Naive thymus-derived CD8-positive, alpha-beta T cell (primary cell): ENCODE measurements at regions of chr1 and their contacts with region 1.

Region 1: GRCh38 chr1:244864253-244865027 is at the start of gene HNRNPU:
- DNase-seq: peak; percentile 94 to 98 (median 96)
- ATAC-seq: peak; percentile 60 to 61
- H3K4me3 Mint-ChIP-seq: peak within 1 kb of the TSS; percentile 87 to 97 (median 94)
- H3K27ac Mint-ChIP-seq: peak within 1 kb of the TSS; percentile 97 to 100 (median 98)
- H3K4me1 Mint-ChIP-seq: peaks cover 21 to 56% (median 40%) of the 10 kb centered on the region in 4 donors
- H3K27me3 Mint-ChIP-seq: peaks cover 0 to 2% (median 0%) of the 10 kb centered on the region in 5 donors
- polyA plus RNA-seq, gene HNRNPU: 179 to 392 (median 281) TPM

Region 2: GRCh38 chr1:244461245-244462071 is 403.0 kb before region 1 on chr1 and contains the start of gene CATSPERE:
- POLR2A ChIA-PET with region 1: interaction called, 13 read pairs
- DNase-seq: peak; percentile 61 to 86 (median 74)
- ATAC-seq: peak; percentile 98 to 99
- H3K4me3 Mint-ChIP-seq: peak within 1 kb of the TSS; percentile 72 to 93 (median 88)
- H3K27ac Mint-ChIP-seq: peak within 1 kb of the TSS; percentile 83 to 97 (median 94)
- H3K4me1 Mint-ChIP-seq: peaks cover 5 to 17% (median 15%) of the 10 kb centered on the region in 4 donors
- H3K27me3 Mint-ChIP-seq: no peaks in the 10 kb centered on the region
- polyA plus RNA-seq, gene CATSPERE: 0.22 to 1.2 (median 0.61) TPM

Region 3: GRCh38 chr1:244801246-244801645 is 63.2 kb before region 1 on chr1:
- POLR2A ChIA-PET with region 1: interaction called, 18 read pairs
- DNase-seq: peak; percentile 23 to 79 (median 56)
- ATAC-seq: peak; percentile 92 to 98
- H3K4me3 Mint-ChIP-seq: peak overlapping the region in 2 of 10 donors; percentile 3 to 21
- H3K27ac Mint-ChIP-seq: peak overlapping the region in 4 of 10 donors; percentile 26 to 67 (median 56)
- H3K4me1 Mint-ChIP-seq: peaks cover 0 to 5% (median 2%) of the 10 kb centered on the region in 4 donors
- H3K27me3 Mint-ChIP-seq: peaks cover 0 to 3% (median 0%) of the 10 kb centered on the region in 5 donors

Region 4: GRCh38 chr1:244918421-244919319 is 54.2 kb after region 1 on chr1:
- POLR2A ChIA-PET with region 1: interaction called, 61 read pairs
- DNase-seq: peak; percentile 46 to 87 (median 79)
- ATAC-seq: peak; percentile 97
- H3K4me3 Mint-ChIP-seq: peak overlapping the region; percentile 85 to 98 (median 92)
- H3K27ac Mint-ChIP-seq: peak overlapping the region; percentile 58 to 97 (median 90)
- H3K4me1 Mint-ChIP-seq: peaks cover 1 to 20% (median 9%) of the 10 kb centered on the region in 4 donors
- H3K27me3 Mint-ChIP-seq: peaks cover 0 to 1% (median 0%) of the 10 kb centered on the region in 5 donors

Region 5: DNA sequence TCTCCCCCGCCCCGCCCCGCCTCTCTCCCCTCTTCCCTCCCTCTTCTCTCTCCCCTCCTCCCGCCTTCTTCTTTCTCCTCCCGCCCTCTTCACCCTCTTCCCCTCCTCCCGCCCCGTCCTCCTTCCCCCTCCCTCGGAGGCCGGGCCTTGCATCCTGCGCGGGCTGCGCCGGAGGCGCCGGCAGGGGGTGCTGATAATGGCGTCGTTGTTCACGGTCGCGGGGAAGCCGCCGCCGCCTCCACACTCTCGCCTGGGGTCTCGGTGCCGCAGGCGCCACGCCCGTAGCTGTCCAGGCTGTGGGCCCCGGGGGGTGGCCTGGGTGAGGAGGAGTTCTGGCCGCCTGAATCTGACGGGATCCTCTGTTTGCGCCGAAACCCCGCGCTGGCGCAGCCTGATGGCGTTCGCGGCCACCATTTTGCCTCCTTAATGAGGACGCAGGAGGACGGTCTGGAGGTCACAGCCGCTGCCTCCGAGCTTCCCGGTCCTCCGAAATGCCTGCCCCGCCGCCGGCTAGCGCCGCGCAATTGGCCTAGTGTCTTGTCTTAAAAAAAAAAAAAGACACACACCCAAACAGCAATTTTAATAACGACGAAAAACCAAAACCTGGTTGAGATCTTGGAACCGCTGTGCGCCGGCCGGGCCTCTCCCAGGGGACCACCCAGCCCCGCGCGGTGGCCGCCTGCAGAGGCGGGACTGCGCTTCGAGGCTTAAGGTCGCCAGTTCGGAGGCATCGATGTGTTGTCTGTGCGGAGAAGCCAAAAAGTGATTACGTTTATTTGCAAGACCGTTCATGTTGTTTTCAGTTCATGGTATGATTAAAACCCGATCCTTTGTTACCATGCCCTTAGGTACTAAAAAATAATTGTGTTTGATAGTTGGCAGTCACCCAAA is 106.5 kb after region 1 on chr1:
- POLR2A ChIA-PET with region 1: interaction called, 366 read pairs
- DNase-seq: peak; percentile 90 to 99 (median 94)
- ATAC-seq: peak; percentile 71 to 73
- H3K4me3 Mint-ChIP-seq: peak overlapping the region; percentile 89 to 98 (median 94)
- H3K27ac Mint-ChIP-seq: peak overlapping the region; percentile 99 to 100 (median 99)
- H3K4me1 Mint-ChIP-seq: peaks cover 6 to 26% (median 21%) of the 10 kb centered on the region in 4 donors
- H3K27me3 Mint-ChIP-seq: no peaks in the 10 kb centered on the region